ENCODE measurements at regions of chr3 and their contacts with region 1.

Region 1: GRCh38 chr3:51670823-51671733 is at the start of gene TEX264:
- DNase-seq: peak; percentile 95 to 97 (median 96)
- H3K4me3 ChIP-seq: peak within 1 kb of the TSS; percentile 88 to 89
- H3K4me3 Mint-ChIP-seq: peak within 1 kb of the TSS; percentile 88 to 95 (median 92)
- H3K27ac ChIP-seq: peak within 1 kb of the TSS; percentile 83
- H3K27ac Mint-ChIP-seq: peak within 1 kb of the TSS; percentile 95 to 97 (median 97)
- H3K4me1 ChIP-seq: peaks cover 66% of the 10 kb centered on the region
- H3K4me1 Mint-ChIP-seq: peaks cover 54 to 74% (median 63%) of the 10 kb centered on the region in 4 donors
- H3K27me3 ChIP-seq: no peaks in the 10 kb centered on the region
- H3K27me3 Mint-ChIP-seq: no peaks in the 10 kb centered on the region
- total RNA-seq, gene TEX264: 40.0 to 40.9 TPM

Region 2: GRCh38 chr3:51384726-51385473 is 286.2 kb before region 1 on chr3 and contains the start of gene MANF:
- CTCF ChIA-PET with region 1: interaction called, 19 read pairs
- POLR2A ChIA-PET with region 1: interaction called, 17 read pairs
- intact Hi-C with region 1: loop called (anchors 1 kb)
- DNase-seq: peak; percentile 97 to 98 (median 98)
- H3K4me3 ChIP-seq: peak within 1 kb of the TSS; percentile 61 to 93
- H3K4me3 Mint-ChIP-seq: peak within 1 kb of the TSS; percentile 98 to 99 (median 99)
- H3K27ac ChIP-seq: peak within 1 kb of the TSS; percentile 92
- H3K27ac Mint-ChIP-seq: peak within 1 kb of the TSS; percentile 98 to 100 (median 99)
- H3K4me1 ChIP-seq: peaks cover 38% of the 10 kb centered on the region
- H3K4me1 Mint-ChIP-seq: peaks cover 25 to 62% (median 42%) of the 10 kb centered on the region in 4 donors
- H3K27me3 ChIP-seq: no peaks in the 10 kb centered on the region
- H3K27me3 Mint-ChIP-seq: no peaks in the 10 kb centered on the region
- total RNA-seq, gene MANF: 74.8 to 79.0 TPM

Region 3: DNA sequence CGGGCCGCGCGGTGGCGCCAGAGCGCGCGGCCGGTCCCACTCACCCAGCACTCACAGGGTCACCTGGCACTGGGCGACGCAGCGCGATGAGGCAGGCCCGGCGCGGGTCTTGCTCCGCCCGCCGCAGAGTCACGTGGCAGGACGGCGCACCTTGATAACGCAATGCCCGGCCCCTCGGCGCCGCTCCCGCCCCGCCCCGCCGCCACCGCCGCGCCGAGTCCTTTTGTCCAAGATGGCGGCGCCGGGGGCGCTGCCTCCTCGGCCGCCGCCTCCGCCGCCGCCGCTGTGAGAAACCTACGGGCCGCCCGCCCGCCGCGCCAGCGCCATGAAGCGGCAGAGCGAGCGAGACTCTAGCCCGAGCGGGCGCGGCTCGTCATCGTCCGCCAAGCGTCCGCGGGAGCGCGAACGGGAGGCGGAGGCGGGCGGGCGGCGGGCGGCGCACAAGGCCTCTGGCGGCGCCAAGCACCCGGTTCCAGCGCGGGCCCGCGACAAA is 280.0 kb before region 1 on chr3 and contains the start of gene RBM15B:
- CTCF ChIA-PET with region 1: interaction called, 19 read pairs
- POLR2A ChIA-PET with region 1: interaction called, 17 read pairs
- intact Hi-C with region 1: loop called (anchors 1 kb)
- DNase-seq: peak; percentile 96 to 98 (median 97)
- H3K4me3 ChIP-seq: peak within 1 kb of the TSS; percentile 57
- H3K4me3 Mint-ChIP-seq: peak within 1 kb of the TSS; percentile 76 to 91 (median 83)
- H3K27ac ChIP-seq: peak within 1 kb of the TSS; percentile 79
- H3K27ac Mint-ChIP-seq: peak within 1 kb of the TSS; percentile 89 to 97 (median 95)
- H3K4me1 ChIP-seq: peaks cover 69% of the 10 kb centered on the region
- H3K4me1 Mint-ChIP-seq: peaks cover 33 to 81% (median 61%) of the 10 kb centered on the region in 4 donors
- H3K27me3 ChIP-seq: no peaks in the 10 kb centered on the region
- H3K27me3 Mint-ChIP-seq: no peaks in the 10 kb centered on the region
- total RNA-seq, gene RBM15B: 38.3 to 39.9 TPM

Region 4: GRCh38 chr3:51538459-51539290 is 132.4 kb before region 1 on chr3 and contains the start of gene RAD54L2:
- CTCF ChIA-PET with region 1: interaction called, 22 read pairs
- POLR2A ChIA-PET with region 1: interaction called, 8 read pairs
- intact Hi-C with region 1: no loop called
- DNase-seq: peak; percentile 62 to 74 (median 66)
- H3K4me3 ChIP-seq: peak within 1 kb of the TSS; percentile 76 to 80
- H3K4me3 Mint-ChIP-seq: peak within 1 kb of the TSS; percentile 85 to 98 (median 94)
- H3K27ac ChIP-seq: peak within 1 kb of the TSS; percentile 67
- H3K27ac Mint-ChIP-seq: peak within 1 kb of the TSS; percentile 91 to 97 (median 95)
- H3K4me1 ChIP-seq: peaks cover 27% of the 10 kb centered on the region
- H3K4me1 Mint-ChIP-seq: peaks cover 26 to 42% (median 33%) of the 10 kb centered on the region in 4 donors
- H3K27me3 ChIP-seq: no peaks in the 10 kb centered on the region
- H3K27me3 Mint-ChIP-seq: no peaks in the 10 kb centered on the region
- total RNA-seq, gene RAD54L2: 39.8 to 40.1 TPM

Region 5: DNA sequence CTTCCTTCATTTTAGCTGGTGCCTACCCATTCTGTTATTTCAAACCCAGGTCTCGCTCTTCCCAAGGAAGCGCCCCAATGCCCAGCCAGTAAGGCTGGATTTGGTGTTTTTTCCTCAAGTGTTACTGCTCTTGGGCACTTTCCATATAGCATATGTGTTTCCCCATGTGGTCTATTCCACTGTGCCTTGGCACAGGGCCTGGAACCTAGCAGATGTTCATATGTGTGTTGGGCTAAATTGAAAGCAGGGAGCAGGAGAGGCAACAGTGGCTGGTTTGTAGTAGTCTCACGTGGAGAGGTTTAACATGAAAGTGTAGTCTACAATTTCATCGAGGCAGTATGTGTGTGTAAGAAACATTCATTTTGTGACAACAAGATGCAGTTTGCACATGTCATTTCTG is 48.2 kb before region 1 on chr3:
- CTCF ChIA-PET with region 1: no interaction called
- POLR2A ChIA-PET with region 1: no interaction called
- intact Hi-C with region 1: no loop called
- DNase-seq: no peak
- H3K4me3 ChIP-seq: no peak overlapping the region
- H3K4me3 Mint-ChIP-seq: no peak overlapping the region
- H3K27ac ChIP-seq: no peak overlapping the region
- H3K27ac Mint-ChIP-seq: peak overlapping the region in 2 of 7 donors; percentile 3 to 46
- H3K4me1 ChIP-seq: no peaks in the 10 kb centered on the region
- H3K4me1 Mint-ChIP-seq: peaks cover 9 to 27% (median 18%) of the 10 kb centered on the region in 4 donors
- H3K27me3 ChIP-seq: no peaks in the 10 kb centered on the region
- H3K27me3 Mint-ChIP-seq: no peaks in the 10 kb centered on the region

Region 6: DNA sequence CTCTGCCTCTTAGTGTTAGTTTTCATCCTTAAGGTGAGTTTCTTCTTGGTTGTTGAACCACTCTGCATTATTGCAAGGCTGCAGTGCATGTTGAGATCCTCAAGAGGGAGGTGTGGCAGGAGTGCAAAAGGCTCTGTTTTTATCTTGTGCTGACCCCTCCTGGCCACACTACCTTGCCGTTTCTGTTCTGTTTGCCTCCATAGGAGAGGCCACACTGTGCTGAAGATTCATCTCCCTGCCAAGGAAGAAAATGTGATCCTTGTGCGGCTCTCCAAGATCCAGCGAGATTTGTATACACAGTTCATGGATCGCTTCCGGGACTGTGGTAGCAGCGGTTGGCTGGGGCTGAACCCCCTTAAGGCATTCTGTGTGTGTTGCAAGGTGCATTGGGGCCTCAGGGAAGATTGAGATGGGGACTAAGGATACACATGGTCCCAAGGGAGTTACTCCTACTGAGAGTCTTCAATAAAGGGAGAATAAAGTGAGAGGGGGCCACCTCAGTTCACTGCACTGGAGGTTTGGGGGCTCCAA is 33.1 kb before region 1 on chr3:
- CTCF ChIA-PET with region 1: interaction called, 63 read pairs
- POLR2A ChIA-PET with region 1: interaction called, 3 read pairs
- intact Hi-C with region 1: no loop called
- DNase-seq: peak in 2 of 5 donors; percentile 6 to 19
- H3K4me3 ChIP-seq: no peak overlapping the region
- H3K4me3 Mint-ChIP-seq: no peak overlapping the region
- H3K27ac ChIP-seq: no peak overlapping the region
- H3K27ac Mint-ChIP-seq: peak overlapping the region in 2 of 7 donors; percentile 27 to 29
- H3K4me1 ChIP-seq: no peaks in the 10 kb centered on the region
- H3K4me1 Mint-ChIP-seq: peaks cover 0 to 2% (median 0%) of the 10 kb centered on the region in 4 donors
- H3K27me3 ChIP-seq: no peaks in the 10 kb centered on the region
- H3K27me3 Mint-ChIP-seq: no peaks in the 10 kb centered on the region

Region 7: DNA sequence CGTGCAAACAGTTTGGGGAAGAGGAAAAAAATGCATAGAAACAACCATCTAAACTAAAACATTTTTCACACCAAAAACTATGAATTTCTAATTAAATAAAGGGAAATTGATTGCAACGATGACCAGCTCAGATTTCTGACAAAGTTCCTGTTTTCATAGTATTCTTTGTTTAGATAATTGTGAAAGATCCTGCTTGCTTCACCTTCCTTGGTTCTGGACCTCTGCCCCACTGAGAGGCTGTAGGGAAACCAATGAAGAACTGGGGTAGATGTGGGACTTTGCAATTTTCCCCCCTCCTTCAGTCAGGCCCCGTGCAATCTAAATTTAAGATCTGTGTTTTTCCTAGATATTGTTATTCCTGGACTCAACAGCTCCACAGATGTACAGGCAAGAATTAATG is 13.8 kb before region 1 on chr3:
- CTCF ChIA-PET with region 1: interaction called, 11 read pairs
- POLR2A ChIA-PET with region 1: no interaction called
- intact Hi-C with region 1: no loop called
- DNase-seq: no peak
- H3K4me3 ChIP-seq: no peak overlapping the region
- H3K4me3 Mint-ChIP-seq: no peak overlapping the region
- H3K27ac ChIP-seq: no peak overlapping the region
- H3K27ac Mint-ChIP-seq: peak overlapping the region in 2 of 7 donors; percentile 21 to 64
- H3K4me1 ChIP-seq: no peaks in the 10 kb centered on the region
- H3K4me1 Mint-ChIP-seq: no peaks in the 10 kb centered on the region
- H3K27me3 ChIP-seq: no peaks in the 10 kb centered on the region
- H3K27me3 Mint-ChIP-seq: no peaks in the 10 kb centered on the region

Region 8: DNA sequence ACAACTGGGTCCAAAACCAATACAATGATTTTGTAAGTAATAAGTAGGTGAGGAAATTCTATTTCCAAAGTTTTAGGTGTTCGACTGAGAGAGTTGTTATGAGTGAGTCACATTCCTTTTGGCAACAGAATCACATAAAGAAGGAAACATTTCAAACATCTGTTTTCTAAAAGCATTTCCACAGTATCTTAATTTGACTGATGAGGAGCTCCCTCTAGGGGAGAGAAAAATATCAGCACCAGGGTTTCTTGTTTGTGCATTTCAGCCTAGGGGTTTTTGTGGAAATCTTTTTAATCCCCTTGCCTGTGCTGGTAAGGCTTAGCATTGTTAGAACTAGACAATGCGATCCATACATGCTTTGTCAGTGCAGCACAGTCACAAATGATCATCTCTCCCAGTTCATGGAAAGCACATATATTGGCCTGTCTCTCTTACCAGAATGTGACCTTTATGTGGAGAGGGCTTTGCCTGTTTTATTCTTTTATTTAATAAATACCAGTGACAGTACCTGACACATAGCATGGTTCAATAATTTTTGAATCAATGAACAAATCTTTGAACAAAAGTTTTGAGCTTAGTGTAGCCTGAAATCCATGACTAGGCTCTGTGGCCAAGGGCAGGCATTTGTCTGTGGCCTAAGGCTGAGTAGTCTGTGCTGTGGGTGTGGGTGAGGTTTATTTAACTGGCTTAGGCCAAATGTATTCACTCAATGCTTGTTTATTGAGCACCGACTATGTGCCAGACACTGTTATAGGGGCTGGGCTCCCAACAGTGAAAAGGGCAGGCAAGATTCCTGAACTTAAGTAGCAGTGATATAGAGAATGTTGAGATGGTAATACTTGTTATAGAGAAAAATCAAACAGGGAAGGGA is 129.0 kb after region 1 on chr3:
- CTCF ChIA-PET with region 1: interaction called, 11 read pairs
- POLR2A ChIA-PET with region 1: interaction called, 3 read pairs
- intact Hi-C with region 1: no loop called
- DNase-seq: peak in 4 of 5 donors; percentile 44 to 61 (median 57)
- H3K4me3 ChIP-seq: no peak overlapping the region
- H3K4me3 Mint-ChIP-seq: no peak overlapping the region
- H3K27ac ChIP-seq: no peak overlapping the region
- H3K27ac Mint-ChIP-seq: peak overlapping the region in 1 of 7 donors; percentile 37
- H3K4me1 ChIP-seq: peaks cover 7% of the 10 kb centered on the region
- H3K4me1 Mint-ChIP-seq: peaks cover 5 to 25% (median 13%) of the 10 kb centered on the region in 4 donors
- H3K27me3 ChIP-seq: no peaks in the 10 kb centered on the region
- H3K27me3 Mint-ChIP-seq: peaks cover 2 to 4% of the 10 kb centered on the region in 2 donors